HepG2 (cell line): ENCODE measurements at regions of chr6 and their contacts with region 1.

Region 1: DNA sequence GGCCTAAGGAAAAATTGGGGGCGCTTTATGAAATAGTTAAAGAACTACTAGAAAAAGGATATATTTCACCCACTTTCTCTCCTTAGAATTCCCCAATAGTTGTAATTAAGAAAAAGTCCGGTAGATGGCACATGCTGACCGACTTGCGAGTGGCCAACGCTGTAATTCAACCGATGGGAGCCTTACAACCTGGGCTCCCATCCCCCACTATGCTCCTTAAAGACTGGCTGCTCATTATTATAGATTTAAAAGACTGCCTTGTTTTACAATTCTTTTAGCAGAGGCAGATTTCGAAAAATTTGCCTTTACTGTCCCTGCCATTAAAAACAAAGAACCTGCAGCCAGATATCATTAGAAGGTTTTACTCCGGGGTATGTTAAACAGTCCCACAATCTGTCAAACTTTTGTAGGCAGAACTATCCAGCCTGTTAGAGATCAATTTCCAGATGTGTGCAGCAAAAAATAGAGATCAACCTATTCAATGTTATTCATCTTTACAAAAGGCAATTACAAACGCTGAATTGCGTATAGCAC is 58.5 kb upstream of the PRSS16 start:
- DNase-seq: peak; percentile 66
- ATAC-seq: peak; percentile 88
- H3K4me3 ChIP-seq: peak overlapping the region; percentile 53 to 76 (median 75)
- H3K27ac ChIP-seq: no peak overlapping the region
- H3K4me1 ChIP-seq: peaks cover 16% of the 10 kb centered on the region
- H3K27me3 ChIP-seq: peaks cover 0 to 26% of the 10 kb centered on the region in 2 experiments; a peak in 3 of 5 replicates
- CTCF ChIP-seq: peak; percentile 79
- EP300 ChIP-seq: no peak
- POLR2A ChIP-seq: no peak
- RAD21 ChIP-seq: peak; percentile 82

Region 2: GRCh38 chr6:27031302-27031701 is 157.7 kb before region 1 on chr6:
- CTCF ChIA-PET with region 1: no interaction called
- POLR2A ChIA-PET with region 1: no interaction called
- in situ Hi-C with region 1: no loop called
- intact Hi-C with region 1: no loop called
- DNase-seq: no peak
- ATAC-seq: no peak
- H3K4me3 ChIP-seq: no peak overlapping the region
- H3K27ac ChIP-seq: no peak overlapping the region
- H3K4me1 ChIP-seq: no peaks in the 10 kb centered on the region
- H3K27me3 ChIP-seq: no peaks in the 10 kb centered on the region
- CTCF ChIP-seq: no peak
- EP300 ChIP-seq: no peak
- POLR2A ChIP-seq: no peak
- RAD21 ChIP-seq: no peak

Region 3: GRCh38 chr6:27228963-27229477 is 40.1 kb after region 1 on chr6:
- CTCF ChIA-PET with region 1: no interaction called
- POLR2A ChIA-PET with region 1: no interaction called
- in situ Hi-C with region 1: no loop called
- intact Hi-C with region 1: loop called (anchors 1 kb)
- DNase-seq: no peak
- ATAC-seq: no peak
- H3K4me3 ChIP-seq: peak overlapping the region in 1 of 3 experiments; percentile 35; a peak in 1 of 6 replicates
- H3K27ac ChIP-seq: no peak overlapping the region
- H3K4me1 ChIP-seq: peaks cover 20% of the 10 kb centered on the region
- H3K27me3 ChIP-seq: peaks cover 0 to 3% of the 10 kb centered on the region in 2 experiments; a peak in 1 of 5 replicates
- CTCF ChIP-seq: no peak
- EP300 ChIP-seq: no peak
- POLR2A ChIP-seq: no peak
- RAD21 ChIP-seq: no peak

Region 4: DNA sequence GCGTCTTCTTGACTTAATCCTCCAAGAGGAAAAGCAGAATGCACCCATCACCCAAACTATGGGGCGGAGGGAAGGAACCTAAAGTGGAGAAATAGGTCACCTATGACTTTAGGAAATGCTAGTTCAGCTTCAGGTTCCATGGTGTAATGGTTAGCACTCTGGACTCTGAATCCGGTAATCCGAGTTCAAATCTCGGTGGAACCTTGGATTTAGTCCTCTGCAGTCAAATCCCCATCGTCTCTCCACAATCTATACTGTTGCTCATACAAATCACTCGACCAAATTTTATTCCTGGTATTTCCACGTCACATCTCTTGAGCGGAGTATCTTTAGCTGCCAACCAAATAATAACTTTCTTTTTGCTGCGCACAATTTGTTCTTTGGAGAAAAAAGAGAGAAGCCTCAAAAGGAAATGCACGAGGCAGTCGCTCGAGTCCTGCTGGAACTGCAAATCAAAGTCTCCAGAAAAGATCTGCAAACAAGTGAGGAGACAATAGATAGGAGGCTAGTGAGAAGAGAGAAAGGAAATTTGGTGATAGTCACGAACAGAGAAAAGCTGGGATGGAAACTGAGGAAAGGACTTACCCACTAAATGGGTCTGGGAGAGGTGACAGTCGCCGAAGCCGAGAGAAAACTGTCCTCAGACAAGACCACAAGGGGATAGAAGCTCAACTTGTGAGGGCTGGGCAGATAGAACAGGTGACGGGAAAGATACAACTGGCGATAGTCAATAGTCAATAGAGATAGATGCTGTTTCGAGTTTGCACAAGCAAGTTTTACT is 106.5 kb after region 1 on chr6:
- CTCF ChIA-PET with region 1: no interaction called
- POLR2A ChIA-PET with region 1: no interaction called
- in situ Hi-C with region 1: no loop called
- intact Hi-C with region 1: loop called (anchors 5 kb)
- DNase-seq: peak; percentile 79
- ATAC-seq: peak; percentile 75
- H3K4me3 ChIP-seq: peak overlapping the region; percentile 48 to 75 (median 63)
- H3K27ac ChIP-seq: no peak overlapping the region
- H3K4me1 ChIP-seq: peaks cover 59% of the 10 kb centered on the region
- H3K27me3 ChIP-seq: peaks cover under 1 to 26% of the 10 kb centered on the region in 2 experiments; a peak in 4 of 5 replicates
- CTCF ChIP-seq: no peak
- EP300 ChIP-seq: no peak
- POLR2A ChIP-seq: no peak
- RAD21 ChIP-seq: no peak

Region 5: GRCh38 chr6:27608916-27609883 is 420.2 kb after region 1 on chr6:
- CTCF ChIA-PET with region 1: interaction called, 9 read pairs
- POLR2A ChIA-PET with region 1: no interaction called
- in situ Hi-C with region 1: no loop called
- intact Hi-C with region 1: loop called (anchors 1 kb)
- DNase-seq: peak; percentile 61
- ATAC-seq: peak; percentile 31; the same call in 2 of the 3 replicates
- H3K4me3 ChIP-seq: no peak overlapping the region
- H3K27ac ChIP-seq: no peak overlapping the region
- H3K4me1 ChIP-seq: peaks cover 31% of the 10 kb centered on the region
- H3K27me3 ChIP-seq: no peaks in the 10 kb centered on the region
- CTCF ChIP-seq: peak; percentile 85
- EP300 ChIP-seq: no peak
- POLR2A ChIP-seq: no peak
- RAD21 ChIP-seq: peak; percentile 47; the same call in 1 of the 2 replicates